GM10248 (cell line): ENCODE measurements at regions of chr3 and their contacts with region 1.

Region 1: GRCh38 chr3:128879125-128879969 is at the start of gene ACAD9:
- DNase-seq: peak; percentile 100
- CTCF ChIP-seq: no peak

Region 2: DNA sequence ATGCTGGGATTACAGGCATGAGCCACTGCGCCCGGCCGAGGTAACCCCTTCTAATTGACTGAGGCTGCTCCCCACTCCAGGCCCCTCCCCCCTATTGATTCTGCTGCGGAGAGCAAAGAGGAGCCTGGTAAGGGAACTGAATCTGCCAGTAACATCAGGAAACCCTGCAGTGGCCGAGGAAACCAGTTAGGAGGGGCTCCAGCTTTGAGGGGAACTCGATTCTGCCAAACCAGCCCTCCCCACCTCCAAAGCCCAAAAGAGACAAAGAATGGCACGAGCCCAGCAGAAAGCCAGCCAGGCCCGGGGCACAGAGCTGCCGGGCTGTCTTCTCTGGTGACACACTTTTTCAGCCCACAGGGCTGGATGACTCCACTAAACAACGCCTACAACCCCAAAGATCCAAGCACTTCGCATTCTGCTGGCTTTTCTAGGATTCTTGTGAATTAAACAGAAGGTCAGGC is 15.0 kb before region 1 on chr3:
- CTCF ChIA-PET with region 1: interaction called, 14 read pairs
- POLR2A ChIA-PET with region 1: no interaction called
- DNase-seq: peak; percentile 5
- CTCF ChIP-seq: no peak

Region 3: GRCh38 chr3:128942161-128942876 is 63.0 kb after region 1 on chr3:
- CTCF ChIA-PET with region 1: no interaction called
- POLR2A ChIA-PET with region 1: no interaction called
- DNase-seq: no peak
- CTCF ChIP-seq: no peak